ENCODE measurements at regions of chr1 and their contacts with region 1.

Region 1: DNA sequence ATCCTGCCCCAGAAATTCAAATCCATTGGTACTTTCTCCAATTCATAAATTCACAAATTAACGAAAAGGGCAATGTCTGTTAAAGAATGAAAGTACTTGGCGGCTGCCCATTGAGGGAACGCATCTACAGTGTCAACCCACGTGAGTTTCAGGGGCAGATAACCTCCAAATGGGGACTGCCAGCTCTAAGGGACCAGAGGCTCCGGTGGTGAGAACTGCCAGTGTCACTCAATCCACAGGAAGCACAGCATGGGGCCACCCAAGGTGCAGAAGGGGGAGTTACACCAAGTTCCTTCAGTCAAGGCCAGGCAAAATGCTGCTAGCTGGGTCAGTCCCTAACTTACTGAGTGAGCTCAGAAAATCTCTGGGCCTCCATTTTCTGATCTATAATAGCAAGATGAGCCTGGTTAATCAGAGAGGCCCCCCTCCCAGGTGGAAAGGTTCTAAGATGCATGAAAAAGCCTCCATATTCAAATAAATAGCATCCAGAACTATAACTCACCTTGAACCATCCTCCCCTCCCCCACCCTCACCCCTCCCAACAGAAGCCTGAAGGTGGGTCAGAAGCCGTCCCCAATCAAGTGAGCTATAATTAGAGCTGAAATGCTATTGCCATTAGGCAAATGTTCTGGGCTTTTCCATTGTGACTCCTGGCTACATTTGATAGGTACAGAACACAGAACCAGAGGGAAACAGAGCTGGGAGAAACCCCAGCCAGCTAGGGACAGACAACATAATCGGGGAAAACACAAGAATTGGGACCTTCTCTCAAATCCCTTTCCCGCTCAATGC is 41.7 kb downstream of the LRP8 start:
- ATAC-seq: no peak
- H3K4me3 ChIP-seq: no peak overlapping the region
- H3K27ac ChIP-seq: no peak overlapping the region
- H3K4me1 ChIP-seq: peaks cover 51 to 52% of the 10 kb centered on the region in 2 donors

Region 2: DNA sequence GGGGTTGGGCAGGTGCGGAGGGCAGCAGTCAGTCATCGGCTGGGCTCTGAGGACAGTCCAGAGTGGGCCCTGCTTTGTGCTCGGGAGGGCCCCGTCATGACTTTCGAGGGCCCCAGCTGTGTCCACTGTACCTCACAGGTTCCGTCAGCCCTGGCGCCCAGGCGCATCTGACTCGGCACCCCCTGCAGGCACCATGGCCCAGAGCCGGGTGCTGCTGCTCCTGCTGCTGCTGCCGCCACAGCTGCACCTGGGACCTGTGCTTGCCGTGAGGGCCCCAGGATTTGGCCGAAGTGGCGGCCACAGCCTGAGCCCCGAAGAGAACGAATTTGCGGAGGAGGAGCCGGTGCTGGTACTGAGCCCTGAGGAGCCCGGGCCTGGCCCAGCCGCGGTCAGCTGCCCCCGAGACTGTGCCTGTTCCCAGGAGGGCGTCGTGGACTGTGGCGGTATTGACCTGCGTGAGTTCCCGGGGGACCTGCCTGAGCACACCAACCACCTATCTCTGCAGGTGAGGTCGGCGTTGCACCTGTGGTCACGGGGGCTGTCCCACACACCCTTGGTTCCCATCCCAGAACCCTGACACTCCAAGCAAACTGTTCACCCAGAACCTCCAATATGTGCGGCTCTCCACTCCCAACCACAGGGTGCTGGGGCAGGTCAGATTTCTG is 216.4 kb before region 1 on chr1:
- in situ Hi-C with region 1: no loop called
- ATAC-seq: peak in 1 of 8 experiments; percentile 6
- H3K4me3 ChIP-seq: no peak overlapping the region
- H3K27ac ChIP-seq: no peak overlapping the region
- H3K4me1 ChIP-seq: peaks cover 7 to 8% of the 10 kb centered on the region in 2 donors

Region 3: GRCh38 chr1:53381790-53382401 is 95.7 kb after region 1 on chr1:
- in situ Hi-C with region 1: loop called in 3 of 9 experiments (anchors 10 to 25 kb)
- ATAC-seq: peak in 2 of 8 experiments; percentile 21 to 51
- H3K4me3 ChIP-seq: no peak overlapping the region
- H3K27ac ChIP-seq: no peak overlapping the region
- H3K4me1 ChIP-seq: peaks cover 6 to 13% of the 10 kb centered on the region in 2 donors

Region 4: GRCh38 chr1:53393325-53393792 is 107.2 kb after region 1 on chr1:
- in situ Hi-C with region 1: loop called in 7 of 9 experiments (anchors 10 to 25 kb)
- ATAC-seq: peak; percentile 74 to 94 (median 88)
- H3K4me3 ChIP-seq: no peak overlapping the region
- H3K27ac ChIP-seq: no peak overlapping the region
- H3K4me1 ChIP-seq: peaks cover 34 to 39% of the 10 kb centered on the region in 2 donors

Region 5: GRCh38 chr1:53431805-53432565 is 145.8 kb after region 1 on chr1:
- in situ Hi-C with region 1: no loop called
- ATAC-seq: no peak
- H3K4me3 ChIP-seq: no peak overlapping the region
- H3K27ac ChIP-seq: no peak overlapping the region
- H3K4me1 ChIP-seq: peaks cover 13 to 23% of the 10 kb centered on the region in 2 donors

Region 6: GRCh38 chr1:53771648-53772047 is 485.5 kb after region 1 on chr1:
- in situ Hi-C with region 1: no loop called
- ATAC-seq: no peak
- H3K4me3 ChIP-seq: no peak overlapping the region
- H3K27ac ChIP-seq: no peak overlapping the region
- H3K4me1 ChIP-seq: no peaks in the 10 kb centered on the region